Mammary epithelial cell (primary cell): ENCODE measurements at regions of chr14 and their contacts with region 1.

Region 1: DNA sequence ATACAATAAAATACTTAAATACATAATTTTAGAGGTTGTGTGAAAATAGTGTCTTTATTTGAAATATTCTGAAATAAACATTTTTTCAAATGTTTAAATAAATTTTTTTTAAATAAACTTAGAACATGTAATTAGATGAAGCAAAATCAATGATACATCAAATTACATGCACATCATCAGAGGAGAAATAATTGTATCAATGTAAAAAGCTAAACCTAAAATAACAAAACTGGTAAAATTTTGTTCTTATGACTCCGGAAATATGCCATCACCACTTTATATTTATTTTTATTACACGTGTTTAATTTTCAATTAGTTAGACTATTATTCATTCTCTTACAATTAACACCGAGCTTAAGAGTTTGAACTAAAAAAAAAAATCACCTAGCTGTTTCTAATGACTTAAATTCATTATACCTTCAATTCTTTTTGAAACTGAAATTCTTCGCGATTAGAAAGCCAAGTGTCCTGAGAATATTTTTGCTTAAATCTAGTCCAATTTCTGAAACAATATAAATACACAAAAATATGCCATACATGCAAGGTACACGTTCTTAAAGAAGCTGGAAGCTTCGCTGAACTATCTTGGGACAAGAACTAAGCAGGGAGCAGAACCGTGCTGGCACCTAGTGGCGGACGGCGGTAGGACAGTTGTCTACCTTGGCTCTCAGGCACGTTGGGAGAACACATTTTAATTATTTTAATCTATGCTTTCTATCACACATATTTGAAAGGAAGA is 230.5 kb downstream of the SLC25A21 start:
- DNase-seq: peak; percentile 55
- H3K4me3 ChIP-seq: no peak overlapping the region
- H3K27ac ChIP-seq: no peak overlapping the region
- H3K4me1 ChIP-seq: peaks cover 13% of the 10 kb centered on the region
- H3K27me3 ChIP-seq: no peaks in the 10 kb centered on the region
- CTCF ChIP-seq: peak; percentile 98 to 99

Region 2: GRCh38 chr14:36604757-36605505 is 337.0 kb before region 1 on chr14:
- CTCF ChIA-PET with region 1: interaction called, 13 read pairs
- dilution Hi-C with region 1: no loop called
- in situ Hi-C with region 1: no loop called
- intact Hi-C with region 1: no loop called
- DNase-seq: peak; percentile 66
- H3K4me3 ChIP-seq: no peak overlapping the region
- H3K27ac ChIP-seq: no peak overlapping the region
- H3K4me1 ChIP-seq: no peaks in the 10 kb centered on the region
- H3K27me3 ChIP-seq: no peaks in the 10 kb centered on the region
- CTCF ChIP-seq: peak; percentile 82 to 87

Region 3: GRCh38 chr14:36661756-36662498 is 280.0 kb before region 1 on chr14 and contains the start of gene PAX9:
- CTCF ChIA-PET with region 1: no interaction called
- dilution Hi-C with region 1: no loop called
- in situ Hi-C with region 1: loop called (anchors 10 to 25 kb)
- intact Hi-C with region 1: no loop called
- DNase-seq: peak; percentile 87
- H3K4me3 ChIP-seq: peak within 1 kb of the TSS; percentile 49 to 59 (median 56)
- H3K27ac ChIP-seq: peak within 1 kb of the TSS; percentile 16
- H3K4me1 ChIP-seq: peaks cover 25% of the 10 kb centered on the region
- H3K27me3 ChIP-seq: peaks cover 57% of the 10 kb centered on the region
- CTCF ChIP-seq: no peak
- total RNA-seq, gene PAX9: 3.7 to 5.4 TPM

Region 4: GRCh38 chr14:36773136-36773540 is 168.8 kb before region 1 on chr14:
- CTCF ChIA-PET with region 1: interaction called, 7 read pairs
- dilution Hi-C with region 1: no loop called
- in situ Hi-C with region 1: no loop called
- intact Hi-C with region 1: loop called (anchors 1 kb)
- DNase-seq: peak; percentile 48
- H3K4me3 ChIP-seq: no peak overlapping the region
- H3K27ac ChIP-seq: no peak overlapping the region
- H3K4me1 ChIP-seq: no peaks in the 10 kb centered on the region
- H3K27me3 ChIP-seq: no peaks in the 10 kb centered on the region
- CTCF ChIP-seq: peak; percentile 39 to 46

Region 5: DNA sequence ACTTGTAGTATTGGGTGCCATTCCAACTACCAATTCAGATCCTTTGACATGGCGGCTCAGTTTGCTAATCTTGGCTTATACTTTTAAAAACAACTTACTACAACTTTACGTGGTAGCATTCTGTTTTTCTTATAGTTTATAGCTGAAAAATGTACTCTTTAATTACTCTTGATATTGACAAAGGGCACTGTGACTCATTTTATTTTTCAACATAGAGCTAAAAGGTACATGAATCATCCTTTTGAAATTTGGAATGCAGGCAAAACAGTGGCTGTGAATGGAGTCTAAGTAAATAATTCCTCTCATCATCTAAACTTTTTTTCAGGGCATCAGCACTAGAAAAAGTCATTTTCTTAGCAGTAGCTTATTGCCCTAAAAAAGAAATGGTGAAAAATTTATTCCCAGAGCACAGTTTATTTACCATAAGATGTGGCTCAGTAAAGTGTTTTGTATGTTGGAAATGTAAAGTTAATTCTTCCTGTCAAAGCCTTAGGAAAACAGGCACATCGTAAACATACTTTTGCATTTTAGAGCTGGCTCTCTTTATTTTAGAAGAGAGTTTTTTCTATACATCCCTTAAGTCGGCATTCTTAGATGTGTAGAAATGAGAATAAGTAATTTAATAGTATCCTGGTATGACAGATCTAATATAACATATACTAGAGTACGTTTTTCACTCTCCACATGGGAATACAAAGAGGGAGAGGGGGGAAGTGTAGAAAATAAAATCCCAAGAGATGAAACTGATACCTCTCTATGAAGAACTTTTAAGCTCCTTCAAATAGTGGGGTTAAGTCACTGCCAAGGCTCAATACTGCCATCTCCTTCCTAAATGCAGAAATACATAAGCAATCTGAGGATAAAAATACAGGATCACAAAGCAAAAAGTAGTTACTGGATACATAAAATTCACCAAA is 175.2 kb after region 1 on chr14:
- CTCF ChIA-PET with region 1: interaction called, 12 read pairs
- dilution Hi-C with region 1: no loop called
- in situ Hi-C with region 1: no loop called
- intact Hi-C with region 1: loop called (anchors 1 kb)
- DNase-seq: peak; percentile 68
- H3K4me3 ChIP-seq: no peak overlapping the region
- H3K27ac ChIP-seq: no peak overlapping the region
- H3K4me1 ChIP-seq: peaks cover 16% of the 10 kb centered on the region
- H3K27me3 ChIP-seq: no peaks in the 10 kb centered on the region
- CTCF ChIP-seq: peak; percentile 47 to 70

Region 6: GRCh38 chr14:37230551-37231194 is 288.7 kb after region 1 on chr14:
- CTCF ChIA-PET with region 1: interaction called, 3 read pairs
- dilution Hi-C with region 1: no loop called
- in situ Hi-C with region 1: no loop called
- intact Hi-C with region 1: loop called (anchors 2 kb)
- DNase-seq: peak; percentile 31
- H3K4me3 ChIP-seq: no peak overlapping the region
- H3K27ac ChIP-seq: no peak overlapping the region
- H3K4me1 ChIP-seq: no peaks in the 10 kb centered on the region
- H3K27me3 ChIP-seq: no peaks in the 10 kb centered on the region
- CTCF ChIP-seq: peak; percentile 70 to 75